ENCODE measurements at regions of chr12 and their contacts with region 1.

Region 1: GRCh38 chr12:2034633-2035430 is 18.0 kb upstream of the CACNA1C start:
- DNase-seq: peak; percentile 97
- H3K4me3 ChIP-seq: peak overlapping the region; percentile 35 to 56
- H3K27ac ChIP-seq: no peak overlapping the region; a peak in 1 of 4 replicates
- H3K4me1 ChIP-seq: peaks cover 0 to 12% of the 10 kb centered on the region in 2 experiments; a peak in 1 of 4 replicates
- H3K27me3 ChIP-seq: peaks cover 22% of the 10 kb centered on the region; the same call in 1 of the 2 replicates
- CTCF ChIP-seq: peak; percentile 83
- EP300 ChIP-seq: 0 out of 4 replicates have a peak, but pooled peaks of 1 of the 2 experiments have one; percentile 5
- RAD21 ChIP-seq: peak; percentile 75

Region 2: GRCh38 chr12:2013527-2014223 is 21.2 kb before region 1 on chr12:
- CTCF ChIA-PET with region 1: interaction called, 19 read pairs
- POLR2A ChIA-PET with region 1: interaction called, 3 read pairs
- DNase-seq: peak; percentile 69
- H3K4me3 ChIP-seq: no peak overlapping the region
- H3K27ac ChIP-seq: peak overlapping the region; percentile 16 to 93; a peak in 3 of 4 replicates
- H3K4me1 ChIP-seq: peaks cover 0 to 47% of the 10 kb centered on the region in 2 experiments; a peak in 2 of 4 replicates
- H3K27me3 ChIP-seq: no peaks in the 10 kb centered on the region
- CTCF ChIP-seq: no peak
- EP300 ChIP-seq: peak in 1 of 2 experiments; percentile 80; a peak in 2 of 4 replicates
- RAD21 ChIP-seq: peak; percentile 40

Region 3: DNA sequence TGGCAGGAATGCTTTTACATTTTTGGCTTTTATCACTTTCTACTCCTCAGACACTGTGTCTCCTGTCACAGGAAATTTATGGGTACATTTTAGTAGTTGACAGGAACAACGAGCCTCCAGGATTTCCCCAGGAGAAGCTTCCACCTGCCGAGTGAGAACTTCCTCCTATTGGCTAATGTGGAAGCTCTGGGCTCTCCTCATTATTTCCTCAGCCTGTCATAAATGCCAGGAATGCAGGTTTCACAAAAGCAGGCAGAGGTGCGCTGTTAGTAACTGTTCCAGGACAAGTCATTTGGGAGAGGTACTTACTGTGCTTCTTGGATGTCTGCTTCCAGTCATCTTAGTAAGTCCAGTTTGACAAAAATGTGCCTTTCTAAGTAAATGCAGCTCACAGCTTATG is 11.5 kb before region 1 on chr12:
- CTCF ChIA-PET with region 1: interaction called, 48 read pairs
- POLR2A ChIA-PET with region 1: no interaction called
- DNase-seq: no peak
- H3K4me3 ChIP-seq: no peak overlapping the region
- H3K27ac ChIP-seq: no peak overlapping the region
- H3K4me1 ChIP-seq: peaks cover 0 to 7% of the 10 kb centered on the region in 2 experiments; a peak in 2 of 4 replicates
- H3K27me3 ChIP-seq: peaks cover 15% of the 10 kb centered on the region
- CTCF ChIP-seq: no peak
- EP300 ChIP-seq: no peak
- RAD21 ChIP-seq: no peak

Region 4: GRCh38 chr12:2051700-2052621 is 17.1 kb after region 1 on chr12:
- CTCF ChIA-PET with region 1: interaction called, 11 read pairs
- POLR2A ChIA-PET with region 1: no interaction called
- DNase-seq: peak; percentile 59
- H3K4me3 ChIP-seq: peak overlapping the region; percentile 52 to 82
- H3K27ac ChIP-seq: peak overlapping the region in 1 of 2 experiments; percentile 55; a peak in 1 of 4 replicates
- H3K4me1 ChIP-seq: peaks cover 0 to 31% of the 10 kb centered on the region in 2 experiments; a peak in 1 of 4 replicates
- H3K27me3 ChIP-seq: no peaks in the 10 kb centered on the region; the same call in 1 of the 2 replicates
- CTCF ChIP-seq: peak; percentile 22; the same call in 1 of the 2 replicates
- EP300 ChIP-seq: no peak
- RAD21 ChIP-seq: peak; percentile 51

Measured in SK-N-SH (cell line).